Aorta (tissue), 5 donors: ENCODE measurements at regions of chr20 and their contacts with region 1.

Region 1: DNA sequence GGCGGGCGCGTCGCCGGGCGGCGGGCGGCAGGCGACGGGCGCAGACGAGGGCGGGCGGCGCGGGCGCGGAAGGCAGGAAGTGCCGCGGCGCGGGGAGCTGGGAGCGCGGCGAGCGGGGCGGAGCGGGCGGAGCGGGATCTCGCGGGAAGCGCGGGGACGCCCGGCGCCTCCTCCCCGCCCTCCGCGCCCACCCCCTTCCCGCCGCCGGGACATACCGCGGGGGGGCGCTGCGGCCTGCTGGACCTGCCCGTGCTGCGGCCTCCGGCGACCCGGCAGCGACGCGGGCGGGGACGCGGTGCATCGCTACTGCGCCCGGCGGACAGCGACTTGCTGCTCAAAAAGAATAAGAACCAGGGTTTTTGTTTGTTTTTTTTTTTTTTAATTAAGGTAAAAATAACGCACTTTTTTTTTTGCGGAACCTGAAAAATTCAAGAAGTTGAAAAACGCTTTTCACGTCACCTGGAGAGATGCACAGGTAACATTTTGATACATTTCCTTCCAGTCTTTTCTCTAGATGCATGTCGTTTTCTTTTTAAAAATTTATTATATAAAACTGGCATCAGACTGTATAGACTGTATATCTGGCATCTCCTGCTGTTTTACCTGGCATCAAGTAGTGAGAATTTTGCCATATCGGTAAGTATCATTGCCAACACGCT is at the start of gene CENPB:
- DNase-seq: peak; percentile 93 to 97
- ATAC-seq: peak; percentile 96
- H3K4me3 ChIP-seq: peak within 1 kb of the TSS; percentile 80 to 98
- H3K27ac ChIP-seq: peak within 1 kb of the TSS; percentile 24 to 65
- H3K4me1 ChIP-seq: no peaks in the 10 kb centered on the region
- H3K27me3 ChIP-seq: no peaks in the 10 kb centered on the region
- total RNA-seq, gene CENPB: 79.7 to 89.4 TPM

Region 2: DNA sequence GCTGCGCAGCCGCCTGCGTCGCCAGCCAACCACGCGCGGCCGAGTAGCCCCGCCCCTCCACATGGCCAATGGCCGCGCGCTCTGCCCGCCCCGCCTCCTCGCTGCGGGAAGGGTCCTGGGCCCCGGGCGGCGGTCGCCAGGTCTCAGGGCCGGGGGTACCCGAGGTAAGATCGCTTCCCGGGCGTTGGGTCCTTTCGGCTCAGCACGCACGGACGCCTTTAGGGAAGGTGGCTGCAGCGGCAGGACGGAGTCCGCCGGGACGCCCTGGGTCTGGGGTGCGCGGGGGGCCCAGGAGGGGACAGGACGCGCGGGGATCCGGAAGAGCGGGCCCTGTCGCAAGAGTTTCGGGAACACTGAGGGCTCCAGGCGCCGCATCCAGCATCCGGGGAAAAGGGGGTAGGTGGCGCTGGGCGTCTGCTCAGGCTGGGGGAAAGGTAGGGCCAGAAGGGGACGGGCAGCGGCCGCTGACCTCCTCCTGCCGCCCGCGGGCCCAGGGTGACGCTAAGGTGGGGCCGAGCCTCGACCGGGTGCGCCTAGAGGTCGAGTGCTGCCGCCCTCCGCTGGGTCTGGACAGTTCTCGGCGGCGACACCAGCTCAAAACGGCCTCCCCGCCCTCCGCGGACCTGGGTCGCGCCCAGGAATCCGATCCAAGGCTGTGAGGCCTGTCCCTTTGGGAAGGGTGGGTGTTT is 60.1 kb after region 1 on chr20 and contains the start of gene MAVS:
- intact Hi-C with region 1: loop called in 1 of 2 experiments (anchors 10 kb)
- DNase-seq: peak; percentile 92 to 96
- ATAC-seq: peak; percentile 97
- H3K4me3 ChIP-seq: peak within 1 kb of the TSS; percentile 22 to 92
- H3K27ac ChIP-seq: peak within 1 kb of the TSS; percentile 71 to 77
- H3K4me1 ChIP-seq: no peaks in the 10 kb centered on the region
- H3K27me3 ChIP-seq: no peaks in the 10 kb centered on the region
- total RNA-seq, gene MAVS: 33.4 to 36.1 TPM

Region 3: DNA sequence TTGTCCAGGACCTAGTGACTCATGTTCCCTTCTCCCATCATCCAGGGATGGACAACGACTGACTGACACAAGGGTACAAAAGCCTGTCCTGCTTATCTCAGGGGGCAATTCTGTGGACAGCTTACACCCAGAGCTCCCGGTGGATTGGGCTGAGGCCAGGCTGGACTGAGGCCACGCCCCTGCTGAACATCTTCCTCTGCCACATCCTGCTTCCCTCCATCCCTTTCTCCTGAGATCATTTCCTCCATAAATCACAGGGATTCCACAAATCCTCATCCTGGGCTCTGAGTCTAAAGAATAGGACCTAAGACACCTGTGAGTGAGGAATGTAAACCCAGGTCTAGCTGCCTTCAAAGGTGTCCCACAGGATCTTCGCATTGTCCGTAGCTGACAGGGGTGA is 258.9 kb after region 1 on chr20:
- intact Hi-C with region 1: no loop called
- DNase-seq: no peak
- ATAC-seq: no peak
- H3K4me3 ChIP-seq: no peak overlapping the region
- H3K27ac ChIP-seq: no peak overlapping the region
- H3K4me1 ChIP-seq: peaks cover 0 to 1% of the 10 kb centered on the region in 2 donors
- H3K27me3 ChIP-seq: no peaks in the 10 kb centered on the region